ENCODE measurements at regions of chr11 and their contacts with region 1.

Region 1: GRCh38 chr11:131495423-131495822 is 125.0 kb downstream of the NTM start:
- DNase-seq: peak; percentile 89
- H3K4me3 ChIP-seq: no peak overlapping the region
- H3K27ac ChIP-seq: peak overlapping the region in 3 of 4 donors; percentile 40 to 59 (median 49)
- H3K4me1 ChIP-seq: peaks cover 0 to 23% (median 12%) of the 10 kb centered on the region in 4 donors
- H3K27me3 ChIP-seq: no peaks in the 10 kb centered on the region
- CTCF ChIP-seq: no peak
- EP300 ChIP-seq: no peak
- POLR2A ChIP-seq: no peak

Region 2: DNA sequence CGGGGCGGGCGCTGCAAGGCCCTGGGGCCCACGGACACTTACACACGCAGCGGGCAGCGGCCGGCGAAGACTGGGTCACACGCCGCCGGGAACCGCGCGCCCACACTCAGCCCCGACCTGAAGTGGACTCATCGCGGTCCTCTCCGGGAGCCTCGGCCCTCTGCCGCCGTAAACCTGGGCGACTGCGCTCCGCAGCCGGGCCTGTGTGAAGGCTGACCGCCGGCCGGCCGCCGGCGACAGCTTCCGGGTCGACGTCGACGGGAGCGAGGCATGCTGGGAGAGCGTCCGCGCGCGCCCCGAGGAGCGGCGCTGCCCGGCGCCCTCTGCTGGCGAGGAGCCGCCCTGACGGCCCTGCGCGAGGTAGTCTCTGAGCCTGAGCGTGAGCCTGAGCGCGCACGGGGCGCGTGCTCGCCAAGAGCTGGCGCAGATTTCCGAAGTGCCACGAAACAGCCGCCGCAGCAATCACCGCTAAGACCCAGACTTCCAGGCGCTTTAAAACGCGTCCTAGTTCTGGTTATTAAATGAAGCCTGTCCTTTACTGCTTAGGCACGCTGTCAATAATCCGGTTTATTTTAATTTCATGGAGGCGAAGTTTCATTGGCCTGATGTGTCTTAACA is 579.1 kb before region 1 on chr11 and contains the start of gene SNX19:
- intact Hi-C with region 1: loop called (anchors 10 kb)
- DNase-seq: peak; percentile 96
- H3K4me3 ChIP-seq: peak within 1 kb of the TSS; percentile 68 to 95 (median 80)
- H3K27ac ChIP-seq: peak within 1 kb of the TSS; percentile 89 to 94 (median 91)
- H3K4me1 ChIP-seq: peaks cover 0 to 48% (median 32%) of the 10 kb centered on the region in 4 donors
- H3K27me3 ChIP-seq: no peaks in the 10 kb centered on the region
- CTCF ChIP-seq: peak; percentile 66 to 89 (median 83)
- EP300 ChIP-seq: no peak
- POLR2A ChIP-seq: peak; percentile 81 to 88
- total RNA-seq, gene SNX19: 72.1 to 124 (median 85.9) TPM

Region 3: GRCh38 chr11:131275580-131275979 is 219.8 kb before region 1 on chr11:
- intact Hi-C with region 1: loop called (anchors 10 kb)
- DNase-seq: peak; percentile 74
- H3K4me3 ChIP-seq: no peak overlapping the region
- H3K27ac ChIP-seq: peak overlapping the region in 3 of 4 donors; percentile 29 to 56 (median 55)
- H3K4me1 ChIP-seq: peaks cover 0 to 13% (median 10%) of the 10 kb centered on the region in 4 donors
- H3K27me3 ChIP-seq: no peaks in the 10 kb centered on the region
- CTCF ChIP-seq: no peak
- EP300 ChIP-seq: no peak
- POLR2A ChIP-seq: no peak